Posterior vena cava (tissue), 2 donors: ENCODE measurements at regions of chr1 and their contacts with region 1.

Region 1: DNA sequence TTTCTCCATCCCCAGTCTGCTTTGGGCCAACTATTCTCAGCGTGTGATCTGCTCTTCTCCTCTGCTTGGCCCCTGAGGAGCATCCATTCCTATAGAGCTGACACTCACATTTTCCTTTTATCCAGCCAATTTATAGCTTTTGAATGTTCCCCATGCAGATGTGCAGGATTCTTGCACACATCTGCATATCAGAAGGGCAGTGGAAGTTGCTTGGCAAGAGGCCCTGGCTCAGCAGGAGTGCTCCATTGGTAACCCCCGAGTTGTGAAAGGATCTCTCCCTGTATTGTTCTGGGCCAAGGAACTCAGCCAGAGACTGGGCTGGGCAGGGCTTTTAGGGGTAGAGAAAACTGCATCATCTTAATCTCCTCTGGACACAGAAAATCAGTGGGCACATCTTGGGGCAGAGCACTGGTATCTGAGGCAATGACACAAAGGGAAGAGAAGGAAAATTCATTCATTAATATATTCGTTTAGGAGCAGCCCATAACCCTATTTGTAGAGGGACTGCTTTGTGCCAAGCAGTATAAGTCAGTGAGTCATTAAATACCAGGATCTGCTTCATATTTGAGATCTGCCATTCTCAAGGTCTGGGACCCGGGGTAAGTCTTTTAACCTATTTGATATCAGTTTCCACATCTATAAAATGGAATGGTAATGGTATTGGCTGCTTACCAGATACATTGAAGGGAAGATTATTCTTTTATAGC is 31.0 kb upstream of the BEND5 start:
- DNase-seq: no peak

Region 2: GRCh38 chr1:48688102-48688760 is 119.5 kb before region 1 on chr1:
- intact Hi-C with region 1: loop called in 1 of 2 experiments (anchors 10 kb)
- DNase-seq: no peak

Region 3: GRCh38 chr1:48938975-48939506 is 131.3 kb after region 1 on chr1:
- intact Hi-C with region 1: loop called in 1 of 2 experiments (anchors 5 kb)
- DNase-seq: no peak